Activated T-helper 1 cell treated with anti-CD3 and anti-CD28 coated beads, Interleukin-12 subunit alpha, Interleukin-12 subunit beta, Interleukin-2, Interleukin-4 antibody, amounts not matched to agents 30 ng/mL and 10 ng/mL and 1 ng/mL, durations not matched to agents 14 hours and 24 hours and 36 hours (primary cell): ENCODE measurements at regions of chr10 and their contacts with region 1.

Region 1: DNA sequence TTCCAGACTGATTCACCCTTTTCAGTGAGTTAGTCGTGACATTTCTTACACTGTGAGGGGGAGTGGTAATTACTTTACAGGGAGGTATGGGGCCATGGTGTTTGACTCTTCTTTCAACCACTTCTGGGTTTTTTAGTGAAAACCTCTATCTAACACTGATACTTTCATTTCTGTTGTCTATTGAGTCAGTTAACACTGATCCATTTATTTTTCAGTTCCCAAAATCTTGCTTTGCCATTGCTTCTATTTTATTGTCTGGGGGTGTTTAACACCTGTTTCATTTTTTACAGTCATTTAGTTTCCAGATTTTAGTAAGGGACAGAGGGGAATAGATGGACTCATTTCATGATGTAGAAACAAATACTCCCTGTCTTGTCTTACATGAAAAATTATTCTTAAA is 61.5 kb downstream of the HELLS start:
- DNase-seq: no peak
- H3K4me3 Mint-ChIP-seq: no peak overlapping the region
- H3K27ac Mint-ChIP-seq: peak overlapping the region; percentile 64
- H3K4me1 Mint-ChIP-seq: peaks cover 23% of the 10 kb centered on the region
- H3K27me3 Mint-ChIP-seq: no peaks in the 10 kb centered on the region

Region 2: DNA sequence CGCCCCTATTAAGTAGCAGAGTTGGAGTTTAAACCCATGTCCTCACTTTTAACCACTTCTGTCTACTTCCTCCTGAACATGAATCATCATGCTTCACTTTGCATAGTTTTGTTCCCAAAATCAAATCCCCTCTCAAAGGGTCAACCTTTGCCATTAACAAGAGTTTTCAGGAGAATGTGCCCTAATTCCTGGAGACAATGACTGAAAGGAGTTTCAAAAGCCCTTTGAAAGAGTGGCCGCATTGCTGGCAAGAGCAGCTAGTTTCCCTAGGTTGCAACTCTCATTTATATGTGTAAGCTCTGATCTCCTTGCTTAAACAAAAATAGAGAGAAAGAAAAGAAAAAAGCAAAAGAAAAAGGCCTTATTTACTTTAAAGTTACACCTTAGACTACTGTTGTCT is 840.2 kb before region 1 on chr10:
- intact Hi-C with region 1: no loop called
- DNase-seq: no peak
- H3K4me3 Mint-ChIP-seq: no peak overlapping the region
- H3K27ac Mint-ChIP-seq: no peak overlapping the region
- H3K4me1 Mint-ChIP-seq: no peaks in the 10 kb centered on the region
- H3K27me3 Mint-ChIP-seq: peaks cover 8% of the 10 kb centered on the region

Region 3: DNA sequence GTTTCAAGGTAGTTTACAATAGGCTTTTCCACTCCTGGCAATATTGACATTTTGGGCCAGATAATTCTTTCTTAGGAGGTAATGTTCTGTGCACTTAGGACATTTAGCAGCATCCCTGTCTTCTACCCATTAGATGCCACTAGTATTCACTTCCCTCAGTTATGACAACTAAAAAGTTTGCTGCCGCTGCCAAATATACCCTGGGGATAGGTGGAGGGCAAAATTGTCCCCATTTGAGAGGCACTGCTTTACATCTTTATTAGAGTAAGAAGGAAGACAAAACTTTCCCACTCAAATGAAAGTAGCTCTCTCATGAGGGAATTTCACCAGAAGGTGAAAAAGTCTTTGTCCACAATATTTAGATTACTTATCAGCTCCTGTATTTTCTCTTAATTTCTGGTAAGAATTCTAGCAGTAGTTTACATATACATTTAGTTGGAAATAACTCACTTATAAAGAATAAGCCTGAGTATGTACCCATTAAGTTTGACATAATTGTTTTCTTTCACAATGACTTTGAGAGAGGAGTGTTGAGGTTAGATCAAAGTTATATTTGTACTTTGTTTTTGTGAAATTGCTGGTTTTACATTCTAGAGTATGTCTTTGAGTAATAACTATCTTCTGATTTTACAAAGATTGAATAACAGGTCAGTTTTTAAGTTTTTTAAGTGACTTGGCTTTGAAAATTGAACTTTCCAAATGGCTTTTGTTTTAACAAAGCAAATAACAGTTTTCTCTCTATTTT is 15.5 kb before region 1 on chr10:
- intact Hi-C with region 1: loop called (anchors 1 kb)
- DNase-seq: no peak
- H3K4me3 Mint-ChIP-seq: peak overlapping the region; percentile 46
- H3K27ac Mint-ChIP-seq: peak overlapping the region; percentile 78
- H3K4me1 Mint-ChIP-seq: peaks cover 27% of the 10 kb centered on the region
- H3K27me3 Mint-ChIP-seq: no peaks in the 10 kb centered on the region

Region 4: GRCh38 chr10:95236068-95236903 is 629.2 kb after region 1 on chr10:
- intact Hi-C with region 1: loop called (anchors 1 kb)
- DNase-seq: no peak
- H3K4me3 Mint-ChIP-seq: peak overlapping the region; percentile 46
- H3K27ac Mint-ChIP-seq: peak overlapping the region; percentile 89
- H3K4me1 Mint-ChIP-seq: peaks cover 26% of the 10 kb centered on the region
- H3K27me3 Mint-ChIP-seq: peaks cover 3% of the 10 kb centered on the region